Cardiac septum (tissue), 1 donor: ENCODE measurements at regions of chr14 and their contacts with region 1.

Region 1: DNA sequence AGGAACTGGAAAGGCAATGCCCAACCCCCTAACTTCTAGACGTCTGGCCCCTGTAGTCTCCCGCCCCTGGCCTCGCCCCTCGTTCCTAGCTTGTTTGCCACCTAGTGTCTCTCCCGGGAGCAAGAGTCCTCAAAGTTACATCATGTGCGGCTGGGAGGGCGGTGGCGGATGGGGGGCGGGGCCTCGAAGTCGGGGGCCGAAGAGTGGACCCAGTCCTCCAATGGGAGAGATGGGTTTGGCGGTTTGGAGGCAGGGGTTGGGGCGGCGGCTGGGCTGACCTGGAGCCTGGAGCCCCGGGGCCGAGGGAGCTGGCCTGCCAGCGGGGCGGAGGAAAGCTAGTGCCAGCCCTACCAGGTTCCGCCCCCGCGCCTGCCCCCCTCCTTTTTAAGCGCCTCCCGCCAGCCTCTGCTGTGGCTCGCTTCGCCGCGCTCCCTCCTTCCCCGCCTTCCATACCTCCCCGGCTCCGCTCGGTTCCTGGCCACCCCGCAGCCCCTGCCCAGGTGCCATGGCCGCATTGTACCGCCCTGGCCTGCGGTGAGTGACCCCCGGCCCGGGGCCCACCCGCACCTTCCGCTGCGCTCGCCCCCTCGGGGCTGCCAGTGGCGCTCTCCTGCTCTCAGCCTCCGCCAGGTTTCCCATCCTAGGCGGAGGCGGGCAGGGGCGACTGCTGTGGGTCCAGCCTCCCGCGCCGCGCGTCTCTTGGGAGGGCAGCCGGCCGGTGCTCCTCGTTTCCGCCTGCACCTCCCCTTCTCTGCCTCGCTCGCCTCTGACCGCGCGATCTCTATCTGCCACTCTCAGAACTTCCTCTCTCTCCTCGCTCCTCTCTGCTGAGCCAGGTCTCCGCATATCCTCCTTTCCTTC is at the start of gene PCK2:
- DNase-seq: peak; percentile 91
- total RNA-seq, gene PCK2: 2.2 TPM

Region 2: GRCh38 chr14:23984891-23985602 is 109.1 kb before region 1 on chr14:
- intact Hi-C with region 1: loop called (anchors 10 kb)
- DNase-seq: no peak

Region 3: GRCh38 chr14:24013654-24014514 is 80.2 kb before region 1 on chr14:
- intact Hi-C with region 1: loop called (anchors 5 kb)
- DNase-seq: no peak

Region 4: GRCh38 chr14:24036169-24036962 is 57.8 kb before region 1 on chr14:
- intact Hi-C with region 1: no loop called
- DNase-seq: peak; percentile 88

Region 5: DNA sequence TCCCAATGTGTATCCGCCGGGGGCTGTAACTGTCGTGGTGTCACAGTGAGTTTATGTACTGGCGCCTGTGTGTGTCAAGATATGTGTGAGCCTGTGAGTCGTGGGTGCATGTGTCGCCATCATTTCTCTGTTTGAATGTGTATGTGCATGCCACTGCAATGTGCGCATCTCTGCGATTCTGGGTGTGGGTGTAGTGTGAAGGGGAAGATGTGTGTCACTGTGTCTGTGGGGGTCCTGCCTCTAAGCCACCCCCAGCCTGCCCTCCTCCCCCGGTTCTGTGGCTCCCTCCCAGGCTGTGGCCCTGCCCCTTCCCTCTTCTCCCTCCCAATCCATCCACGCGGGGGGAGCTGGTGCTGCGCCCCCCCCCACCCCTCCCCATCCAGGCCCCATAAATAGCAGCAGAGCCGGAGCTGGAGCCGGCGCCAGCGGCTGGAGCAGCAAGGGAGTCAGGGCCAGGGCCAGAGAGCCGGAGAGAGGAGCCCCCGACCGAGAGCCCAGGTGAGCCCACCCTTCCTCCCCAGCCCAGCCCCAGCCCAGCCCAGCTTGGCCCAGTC is 22.9 kb before region 1 on chr14 and contains the start of gene CPNE6:
- intact Hi-C with region 1: no loop called
- DNase-seq: no peak
- total RNA-seq, gene CPNE6: 1.4 TPM

Region 6: GRCh38 chr14:24141097-24141880 is 47.2 kb after region 1 on chr14 and contains the start of gene EMC9:
- intact Hi-C with region 1: no loop called
- DNase-seq: peak; percentile 100
- total RNA-seq, gene EMC9: 14.6 TPM